ENCODE measurements at regions of chr16 and their contacts with region 1.

Region 1: GRCh38 chr16:20383106-20384029 is 21.2 kb downstream of the PDILT start:
- DNase-seq: peak; percentile 65
- ATAC-seq: peak; percentile 88
- H3K4me3 Mint-ChIP-seq: no peak overlapping the region
- H3K27ac Mint-ChIP-seq: no peak overlapping the region
- H3K4me1 Mint-ChIP-seq: no peaks in the 10 kb centered on the region
- H3K27me3 Mint-ChIP-seq: peaks cover 17% of the 10 kb centered on the region
- CTCF ChIP-seq: peak; percentile 81

Region 2: GRCh38 chr16:19898924-19899604 is 484.3 kb before region 1 on chr16:
- CTCF ChIA-PET with region 1: interaction called, 22 read pairs
- POLR2A ChIA-PET with region 1: no interaction called
- intact Hi-C with region 1: no loop called
- DNase-seq: peak; percentile 66
- ATAC-seq: peak; percentile 72
- H3K4me3 Mint-ChIP-seq: no peak overlapping the region
- H3K27ac Mint-ChIP-seq: no peak overlapping the region
- H3K4me1 Mint-ChIP-seq: peaks cover 1% of the 10 kb centered on the region
- H3K27me3 Mint-ChIP-seq: peaks cover 5% of the 10 kb centered on the region
- CTCF ChIP-seq: peak; percentile 80

Region 3: DNA sequence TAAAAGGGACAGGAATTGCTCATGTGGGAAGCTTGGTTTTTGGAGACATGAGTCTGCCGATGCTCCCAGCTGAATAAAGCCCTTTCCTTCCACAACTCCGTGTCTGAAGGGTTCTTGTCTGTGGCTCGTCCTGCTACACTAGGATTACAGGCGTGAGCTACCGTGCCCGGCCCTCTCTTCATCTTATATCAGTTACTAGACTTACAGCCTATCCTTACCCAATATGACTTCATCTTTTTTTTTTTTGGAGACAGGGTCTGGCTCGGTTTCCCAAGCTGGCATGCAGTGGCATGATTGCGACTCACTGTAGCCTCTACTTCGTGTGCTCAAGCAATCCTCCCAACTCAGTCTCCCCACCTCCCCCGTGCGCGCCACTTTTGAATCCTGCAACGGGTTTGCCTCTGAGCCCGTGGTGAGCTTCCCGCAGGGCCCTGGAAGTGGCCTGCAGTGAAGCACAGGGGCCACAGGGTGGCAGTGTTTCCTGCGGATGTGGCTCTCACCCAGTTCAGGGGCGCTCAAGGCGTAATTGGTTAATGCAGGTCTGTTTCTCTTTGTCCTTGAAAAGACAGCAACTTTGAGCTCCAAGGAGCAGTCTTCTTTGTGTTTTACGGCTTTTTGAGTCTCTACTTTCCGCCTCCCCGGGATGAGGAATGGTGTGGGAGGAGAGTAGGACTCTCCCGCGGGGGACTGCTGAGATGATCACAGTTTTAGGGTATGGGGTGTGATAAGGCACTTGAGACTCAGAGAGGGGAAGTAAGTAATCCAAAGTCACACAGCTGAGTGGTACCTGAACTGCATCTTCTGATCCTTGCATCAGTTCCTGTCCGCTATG is 476.0 kb before region 1 on chr16:
- CTCF ChIA-PET with region 1: interaction called, 106 read pairs
- POLR2A ChIA-PET with region 1: no interaction called
- intact Hi-C with region 1: loop called (anchors 5 kb)
- DNase-seq: peak; percentile 79
- ATAC-seq: peak; percentile 100
- H3K4me3 Mint-ChIP-seq: peak overlapping the region; percentile 46
- H3K27ac Mint-ChIP-seq: no peak overlapping the region
- H3K4me1 Mint-ChIP-seq: peaks cover 11% of the 10 kb centered on the region
- H3K27me3 Mint-ChIP-seq: peaks cover 15% of the 10 kb centered on the region
- CTCF ChIP-seq: peak; percentile 97

Region 4: GRCh38 chr16:20344611-20345010 is 38.8 kb before region 1 on chr16:
- CTCF ChIA-PET with region 1: no interaction called
- POLR2A ChIA-PET with region 1: no interaction called
- intact Hi-C with region 1: no loop called
- DNase-seq: no peak
- ATAC-seq: no peak
- H3K4me3 Mint-ChIP-seq: no peak overlapping the region
- H3K27ac Mint-ChIP-seq: no peak overlapping the region
- H3K4me1 Mint-ChIP-seq: no peaks in the 10 kb centered on the region
- H3K27me3 Mint-ChIP-seq: peaks cover 2% of the 10 kb centered on the region
- CTCF ChIP-seq: no peak

Region 5: GRCh38 chr16:20372701-20373100 is 10.7 kb before region 1 on chr16:
- CTCF ChIA-PET with region 1: interaction called, 21 read pairs
- POLR2A ChIA-PET with region 1: no interaction called
- intact Hi-C with region 1: no loop called
- DNase-seq: no peak
- ATAC-seq: no peak
- H3K4me3 Mint-ChIP-seq: no peak overlapping the region
- H3K27ac Mint-ChIP-seq: no peak overlapping the region
- H3K4me1 Mint-ChIP-seq: no peaks in the 10 kb centered on the region
- H3K27me3 Mint-ChIP-seq: peaks cover 4% of the 10 kb centered on the region
- CTCF ChIP-seq: no peak

Region 6: DNA sequence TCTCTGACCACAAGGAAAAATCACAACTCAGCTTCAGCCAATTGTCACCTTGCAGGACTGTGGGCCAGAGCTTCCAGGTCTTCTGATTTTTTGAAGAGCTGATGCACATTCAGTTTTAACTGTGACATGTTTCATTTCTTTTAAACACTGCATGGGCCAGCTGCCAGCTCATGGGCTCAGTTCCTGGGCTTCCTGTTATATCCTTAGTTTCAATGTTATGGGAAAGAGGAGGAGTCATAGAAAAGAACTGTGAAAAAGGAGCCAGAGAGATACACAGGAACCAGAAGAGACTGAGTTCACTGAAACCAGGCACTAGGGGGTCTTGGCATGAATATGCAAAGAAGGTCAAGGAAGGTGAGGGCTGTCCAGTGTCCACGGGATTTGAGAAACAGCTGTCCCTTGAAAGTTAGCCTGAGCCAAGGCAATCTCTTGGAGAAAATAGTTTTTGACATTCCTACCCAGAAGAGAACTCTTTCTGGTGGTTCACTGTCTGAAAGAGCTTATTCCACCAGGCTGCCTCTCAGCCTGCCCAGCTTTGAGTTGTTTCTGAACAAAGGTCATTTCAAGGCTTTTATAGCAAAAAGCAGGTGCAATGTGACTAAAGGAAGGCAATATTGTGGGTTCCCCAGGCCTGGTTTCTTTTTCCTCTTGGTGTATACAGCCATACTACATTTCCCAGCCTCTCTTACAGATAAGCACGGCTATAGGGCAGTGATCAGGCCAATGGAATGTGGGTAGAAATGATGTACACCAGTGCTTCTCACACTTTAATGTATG is 10.6 kb after region 1 on chr16:
- CTCF ChIA-PET with region 1: interaction called, 32 read pairs
- POLR2A ChIA-PET with region 1: no interaction called
- intact Hi-C with region 1: no loop called
- DNase-seq: no peak
- ATAC-seq: no peak
- H3K4me3 Mint-ChIP-seq: no peak overlapping the region
- H3K27ac Mint-ChIP-seq: no peak overlapping the region
- H3K4me1 Mint-ChIP-seq: no peaks in the 10 kb centered on the region
- H3K27me3 Mint-ChIP-seq: no peaks in the 10 kb centered on the region
- CTCF ChIP-seq: no peak

Measured in activated CD8-positive, alpha-beta T cell treated with anti-CD3 and anti-CD28 coated beads for 36 hours (primary cell).